CD4-positive, alpha-beta T cell (primary cell): ENCODE measurements at regions of chr1 and their contacts with region 1.

Region 1: DNA sequence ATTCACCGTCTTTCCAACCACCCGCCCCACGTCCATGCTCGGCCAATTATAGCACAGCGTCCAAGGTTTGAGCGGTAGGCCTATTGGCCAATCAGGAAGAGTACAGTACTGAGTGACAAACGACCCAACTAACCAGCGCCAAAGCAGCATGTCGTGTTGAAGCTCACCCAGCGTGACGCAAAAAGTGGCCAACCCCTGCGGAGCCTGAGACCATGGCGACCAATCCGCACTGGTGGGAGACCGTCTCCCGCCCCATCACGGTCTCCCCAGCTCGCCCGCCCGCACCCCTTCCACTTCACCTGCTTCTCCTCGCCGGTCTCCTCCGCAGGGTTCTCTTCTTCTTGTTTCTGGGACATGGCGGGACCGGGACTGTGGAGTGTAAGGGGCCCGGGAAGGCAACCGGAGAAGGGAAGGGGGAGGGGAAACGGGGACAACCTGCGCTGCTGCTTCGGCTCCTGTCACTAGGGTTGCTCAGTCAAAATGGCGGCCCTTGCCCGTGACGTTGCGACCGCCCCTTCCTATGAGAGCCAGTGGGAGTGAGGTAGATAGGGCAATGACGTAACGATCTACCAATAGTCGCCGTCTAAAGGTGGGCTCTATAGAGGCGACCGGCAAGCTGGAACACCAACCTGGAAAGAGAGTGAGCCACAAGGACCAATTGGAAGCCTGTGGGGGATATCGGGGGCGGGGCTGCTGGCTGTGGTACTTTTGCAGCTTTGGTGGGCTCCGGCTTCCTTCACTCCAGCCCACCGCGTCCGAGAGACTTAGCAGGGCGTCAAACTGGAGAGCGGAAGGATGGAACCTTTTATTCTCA is at the start of gene ENSA:
- DNase-seq: peak; percentile 89 to 99 (median 92)
- ATAC-seq: peak; percentile 85
- H3K4me3 ChIP-seq: peak within 1 kb of the TSS; percentile 77
- H3K4me3 Mint-ChIP-seq: no peak within 1 kb of the TSS
- H3K27ac ChIP-seq: peak within 1 kb of the TSS; percentile 96 to 97
- H3K27ac Mint-ChIP-seq: no peak within 1 kb of the TSS
- H3K4me1 ChIP-seq: peaks cover 24% of the 10 kb centered on the region
- H3K4me1 Mint-ChIP-seq: peaks cover 21% of the 10 kb centered on the region
- H3K27me3 ChIP-seq: no peaks in the 10 kb centered on the region
- H3K27me3 Mint-ChIP-seq: no peaks in the 10 kb centered on the region
- CTCF ChIP-seq: no peak
- total RNA-seq, gene ENSA: 132 to 137 TPM

Region 2: DNA sequence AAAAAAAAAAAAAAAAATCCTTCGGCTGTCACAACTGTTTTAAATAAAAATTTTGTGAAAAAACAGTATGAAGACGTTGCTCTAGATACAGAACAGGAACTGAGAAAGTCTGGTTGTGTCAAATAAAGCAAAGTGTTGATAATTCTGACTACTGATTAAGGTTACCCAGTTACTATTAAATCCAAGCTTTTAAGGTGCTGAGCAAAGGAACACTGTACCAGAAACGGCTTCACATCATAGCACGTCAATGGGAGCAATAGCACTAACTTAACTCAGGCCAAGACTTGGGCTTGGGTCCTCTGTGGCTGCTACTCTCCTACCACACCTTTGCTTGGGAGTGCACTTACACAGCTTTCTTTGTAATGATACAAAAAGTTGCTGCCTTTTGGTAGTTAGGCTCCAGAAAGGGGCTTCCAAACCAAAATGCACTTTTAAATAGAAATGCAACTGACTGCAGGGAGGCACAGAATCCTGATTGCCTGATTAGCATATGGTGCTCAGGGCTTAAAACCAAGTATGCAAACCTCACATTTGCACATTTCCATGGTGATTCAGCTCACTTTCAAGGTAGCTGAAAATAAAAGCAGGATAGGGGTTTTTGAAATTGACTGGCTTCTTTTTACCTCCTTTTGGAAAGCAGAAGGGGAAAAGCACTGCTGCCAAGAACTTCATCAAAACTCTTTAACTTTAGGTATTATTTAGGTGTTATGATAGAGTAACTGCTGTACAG is 56.2 kb before region 1 on chr1:
- CTCF ChIA-PET with region 1: interaction called, 3 read pairs
- POLR2A ChIA-PET with region 1: interaction called, 501 read pairs
- intact Hi-C with region 1: loop called (anchors 2 kb)
- DNase-seq: peak in 2 of 14 experiments; percentile 33 to 41
- ATAC-seq: no peak
- H3K4me3 ChIP-seq: peak overlapping the region; percentile 84
- H3K4me3 Mint-ChIP-seq: peak overlapping the region; percentile 86
- H3K27ac ChIP-seq: peak overlapping the region; percentile 46 to 97
- H3K27ac Mint-ChIP-seq: peak overlapping the region; percentile 98
- H3K4me1 ChIP-seq: peaks cover 70% of the 10 kb centered on the region
- H3K4me1 Mint-ChIP-seq: peaks cover 84% of the 10 kb centered on the region
- H3K27me3 ChIP-seq: no peaks in the 10 kb centered on the region
- H3K27me3 Mint-ChIP-seq: no peaks in the 10 kb centered on the region
- CTCF ChIP-seq: no peak

Region 3: GRCh38 chr1:150613061-150613920 is 16.0 kb before region 1 on chr1:
- CTCF ChIA-PET with region 1: interaction called, 3 read pairs
- POLR2A ChIA-PET with region 1: interaction called, 17 read pairs
- intact Hi-C with region 1: loop called in 1 of 2 experiments (anchors 1 kb)
- DNase-seq: peak in 10 of 14 experiments; percentile 16 to 84 (median 35)
- ATAC-seq: peak; percentile 26
- H3K4me3 ChIP-seq: no peak overlapping the region
- H3K4me3 Mint-ChIP-seq: peak overlapping the region; percentile 30
- H3K27ac ChIP-seq: peak overlapping the region; percentile 75 to 76
- H3K27ac Mint-ChIP-seq: peak overlapping the region; percentile 80
- H3K4me1 ChIP-seq: peaks cover 60% of the 10 kb centered on the region
- H3K4me1 Mint-ChIP-seq: peaks cover 55% of the 10 kb centered on the region
- H3K27me3 ChIP-seq: no peaks in the 10 kb centered on the region
- H3K27me3 Mint-ChIP-seq: no peaks in the 10 kb centered on the region
- CTCF ChIP-seq: no peak

Region 4: GRCh38 chr1:150696590-150697524 is 67.5 kb after region 1 on chr1 and contains the start of gene GOLPH3L:
- CTCF ChIA-PET with region 1: no interaction called
- POLR2A ChIA-PET with region 1: interaction called, 29 read pairs
- intact Hi-C with region 1: loop called in 1 of 2 experiments (anchors 1 kb)
- DNase-seq: peak; percentile 73 to 98 (median 83)
- ATAC-seq: peak; percentile 99
- H3K4me3 ChIP-seq: peak within 1 kb of the TSS; percentile 69
- H3K4me3 Mint-ChIP-seq: peak within 1 kb of the TSS; percentile 94
- H3K27ac ChIP-seq: peak within 1 kb of the TSS; percentile 39 to 62
- H3K27ac Mint-ChIP-seq: peak within 1 kb of the TSS; percentile 88
- H3K4me1 ChIP-seq: no peaks in the 10 kb centered on the region
- H3K4me1 Mint-ChIP-seq: peaks cover 40% of the 10 kb centered on the region
- H3K27me3 ChIP-seq: no peaks in the 10 kb centered on the region
- H3K27me3 Mint-ChIP-seq: peaks cover 4% of the 10 kb centered on the region
- CTCF ChIP-seq: no peak
- total RNA-seq, gene GOLPH3L: 2.4 to 2.6 TPM

Region 5: GRCh38 chr1:151292207-151293030 is 663.1 kb after region 1 on chr1:
- CTCF ChIA-PET with region 1: no interaction called
- POLR2A ChIA-PET with region 1: no interaction called
- intact Hi-C with region 1: no loop called
- DNase-seq: peak in 1 of 14 experiments; percentile 32
- ATAC-seq: peak; percentile 39
- H3K4me3 ChIP-seq: no peak overlapping the region
- H3K4me3 Mint-ChIP-seq: no peak overlapping the region
- H3K27ac ChIP-seq: no peak overlapping the region
- H3K27ac Mint-ChIP-seq: peak overlapping the region; percentile 51
- H3K4me1 ChIP-seq: peaks cover 25% of the 10 kb centered on the region
- H3K4me1 Mint-ChIP-seq: peaks cover 7% of the 10 kb centered on the region
- H3K27me3 ChIP-seq: no peaks in the 10 kb centered on the region
- H3K27me3 Mint-ChIP-seq: no peaks in the 10 kb centered on the region
- CTCF ChIP-seq: no peak

Region 6: GRCh38 chr1:151635479-151636072 is 1006.3 kb after region 1 on chr1:
- CTCF ChIA-PET with region 1: no interaction called
- POLR2A ChIA-PET with region 1: no interaction called
- intact Hi-C with region 1: no loop called
- DNase-seq: no peak
- ATAC-seq: no peak
- H3K4me3 ChIP-seq: no peak overlapping the region
- H3K4me3 Mint-ChIP-seq: no peak overlapping the region
- H3K27ac ChIP-seq: no peak overlapping the region
- H3K27ac Mint-ChIP-seq: no peak overlapping the region
- H3K4me1 ChIP-seq: no peaks in the 10 kb centered on the region
- H3K4me1 Mint-ChIP-seq: peaks cover 14% of the 10 kb centered on the region
- H3K27me3 ChIP-seq: no peaks in the 10 kb centered on the region
- H3K27me3 Mint-ChIP-seq: no peaks in the 10 kb centered on the region
- CTCF ChIP-seq: no peak